Activated CD4-positive, alpha-beta memory T cell treated with anti-CD3 and anti-CD28 coated beads for 36 hours (primary cell): ENCODE measurements at regions of chr17 and their contacts with region 1.

Region 1: DNA sequence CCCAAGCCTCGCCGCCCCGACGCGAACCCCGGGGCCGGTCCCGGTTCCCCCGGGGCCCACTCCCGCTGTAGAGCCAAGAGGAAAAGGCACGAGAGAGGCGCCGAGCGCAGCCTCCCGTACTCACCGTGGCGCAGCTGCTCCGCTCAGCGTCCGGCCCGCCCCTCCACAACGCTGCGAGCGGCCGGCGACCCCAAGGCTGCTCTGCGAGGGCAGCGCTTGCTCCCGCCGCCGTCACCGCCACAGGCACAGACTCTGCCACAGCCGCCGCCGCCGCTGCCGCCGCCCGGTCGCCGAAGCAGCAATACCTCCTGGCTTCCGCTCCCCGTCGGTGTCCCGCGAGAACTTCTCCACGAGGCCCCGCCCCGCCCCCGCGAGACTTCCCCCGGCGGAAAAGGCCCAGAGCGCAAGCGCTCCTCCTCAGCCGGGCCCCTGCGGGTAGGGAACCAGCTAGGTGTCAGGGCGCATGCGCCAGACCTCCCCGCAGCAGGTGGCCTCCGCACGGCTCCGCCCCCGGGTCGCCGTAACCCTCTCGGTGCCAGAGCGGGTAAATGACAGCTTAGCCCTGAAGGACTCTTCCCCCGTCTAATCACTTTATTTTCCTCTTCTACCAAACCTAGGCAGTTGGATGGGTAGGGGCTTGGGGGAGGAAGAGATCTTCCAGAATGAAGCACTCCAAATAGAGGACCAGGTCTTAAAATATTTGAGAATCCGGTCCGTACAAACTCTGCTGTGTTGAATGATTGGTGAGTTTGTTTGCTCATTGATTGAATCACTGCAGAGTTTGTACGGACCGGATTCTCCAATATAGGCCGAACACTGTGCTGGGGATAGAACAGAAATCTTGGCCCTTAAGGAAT is at the start of gene GRB2:
- DNase-seq: peak; percentile 100
- H3K4me3 Mint-ChIP-seq: peak within 1 kb of the TSS; percentile 89
- H3K27ac Mint-ChIP-seq: peak within 1 kb of the TSS; percentile 95
- H3K4me1 Mint-ChIP-seq: peaks cover 31% of the 10 kb centered on the region
- H3K27me3 Mint-ChIP-seq: no peaks in the 10 kb centered on the region
- total RNA-seq, gene GRB2: 174 to 182 TPM

Region 2: GRCh38 chr17:75034236-75034908 is 371.2 kb before region 1 on chr17:
- CTCF ChIA-PET with region 1: no interaction called
- POLR2A ChIA-PET with region 1: no interaction called
- intact Hi-C with region 1: loop called (anchors 10 kb)
- DNase-seq: peak; percentile 95
- H3K4me3 Mint-ChIP-seq: peak overlapping the region; percentile 97
- H3K27ac Mint-ChIP-seq: peak overlapping the region; percentile 96
- H3K4me1 Mint-ChIP-seq: peaks cover 49% of the 10 kb centered on the region
- H3K27me3 Mint-ChIP-seq: peaks cover 4% of the 10 kb centered on the region

Region 3: GRCh38 chr17:75295201-75296158 is 110.1 kb before region 1 on chr17:
- CTCF ChIA-PET with region 1: interaction called, 6 read pairs
- POLR2A ChIA-PET with region 1: interaction called, 15 read pairs
- intact Hi-C with region 1: loop called (anchors 1 kb)
- DNase-seq: peak; percentile 58
- H3K4me3 Mint-ChIP-seq: peak overlapping the region; percentile 37
- H3K27ac Mint-ChIP-seq: peak overlapping the region; percentile 99
- H3K4me1 Mint-ChIP-seq: peaks cover 35% of the 10 kb centered on the region
- H3K27me3 Mint-ChIP-seq: no peaks in the 10 kb centered on the region

Region 4: GRCh38 chr17:75338335-75338734 is 67.3 kb before region 1 on chr17:
- CTCF ChIA-PET with region 1: interaction called, 3 read pairs
- POLR2A ChIA-PET with region 1: interaction called, 7 read pairs
- intact Hi-C with region 1: loop called (anchors 2 kb)
- DNase-seq: peak; percentile 37
- H3K4me3 Mint-ChIP-seq: peak overlapping the region; percentile 33
- H3K27ac Mint-ChIP-seq: peak overlapping the region; percentile 74
- H3K4me1 Mint-ChIP-seq: peaks cover 78% of the 10 kb centered on the region
- H3K27me3 Mint-ChIP-seq: no peaks in the 10 kb centered on the region

Region 5: DNA sequence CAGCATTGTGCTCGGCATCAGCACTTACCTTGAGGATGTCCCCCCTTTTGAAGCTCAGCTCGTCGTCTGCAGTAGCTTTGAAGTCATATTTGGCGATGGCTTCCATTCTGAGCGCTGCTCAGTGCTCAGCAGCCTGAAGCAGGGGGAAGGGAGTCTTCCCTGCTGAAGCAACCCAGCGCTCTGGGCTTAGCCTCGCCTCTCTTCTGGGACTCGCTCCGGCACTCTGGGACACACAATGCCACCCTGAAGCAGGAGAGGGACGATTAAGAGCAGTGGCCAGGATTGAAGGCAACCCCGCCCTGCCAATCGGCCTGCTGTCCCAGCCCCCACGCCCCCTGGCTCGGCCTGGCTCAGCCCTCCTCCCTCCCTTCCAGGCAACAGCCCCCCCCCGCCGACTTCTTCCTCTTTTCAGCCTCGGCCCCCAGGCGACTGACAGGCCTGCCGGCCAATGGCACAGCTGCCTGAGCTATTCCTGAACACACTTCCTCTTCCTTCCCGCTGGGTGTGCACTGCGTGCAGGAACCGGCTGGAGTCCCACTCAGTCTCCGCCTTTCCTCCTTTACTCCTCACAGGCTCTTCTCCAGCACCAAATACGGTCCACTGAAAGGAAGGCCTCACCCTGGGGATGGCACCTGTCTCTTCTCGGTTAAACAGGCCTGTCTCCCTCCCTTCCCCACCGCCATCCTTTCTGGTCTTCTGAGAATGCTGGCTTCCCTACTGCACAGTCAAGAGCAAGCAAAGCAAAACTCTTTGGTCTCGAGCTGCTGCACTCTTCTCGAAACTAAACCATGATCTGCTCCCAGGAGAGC is 11.9 kb before region 1 on chr17:
- CTCF ChIA-PET with region 1: interaction called, 10 read pairs
- POLR2A ChIA-PET with region 1: interaction called, 8 read pairs
- intact Hi-C with region 1: loop called (anchors 1 kb)
- DNase-seq: peak; percentile 91
- H3K4me3 Mint-ChIP-seq: peak overlapping the region; percentile 96
- H3K27ac Mint-ChIP-seq: peak overlapping the region; percentile 85
- H3K4me1 Mint-ChIP-seq: peaks cover 76% of the 10 kb centered on the region
- H3K27me3 Mint-ChIP-seq: no peaks in the 10 kb centered on the region

Region 6: DNA sequence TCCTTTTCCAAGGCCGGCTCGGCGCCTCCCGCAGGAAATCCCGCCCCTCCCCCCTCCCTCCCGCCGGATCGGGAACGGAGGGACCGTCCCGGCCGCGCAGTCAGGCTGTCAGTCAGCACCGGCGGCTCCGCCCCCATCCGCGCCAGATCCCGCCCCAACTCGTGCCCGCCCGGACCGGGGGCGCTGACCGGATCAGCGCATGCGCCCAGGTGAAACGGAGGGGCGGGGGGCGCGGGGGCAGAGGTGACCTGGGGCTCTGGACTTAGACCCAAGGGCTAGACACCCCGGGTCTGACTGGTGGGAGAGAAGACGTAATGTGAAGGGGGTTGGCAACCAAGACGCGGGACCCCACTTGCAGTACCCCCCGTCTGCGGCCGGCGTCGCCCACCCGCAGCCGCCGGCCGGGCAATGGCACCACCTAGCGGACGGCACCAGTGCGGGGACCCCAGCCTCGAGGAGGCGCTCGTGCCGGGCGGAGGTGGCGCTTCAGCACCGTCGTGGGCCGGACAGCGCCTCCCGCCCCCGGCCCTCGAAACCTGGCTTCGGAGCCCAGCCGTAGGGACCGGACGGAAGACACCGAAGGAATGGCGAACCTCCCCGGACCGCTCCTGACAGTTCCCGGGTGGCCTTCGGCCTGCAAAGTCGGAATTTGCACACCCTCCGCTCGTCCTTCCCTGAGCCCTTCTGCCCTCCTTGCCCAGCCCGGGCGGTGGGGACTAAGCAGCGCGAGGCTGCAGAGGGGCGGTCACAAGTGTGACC is 110.1 kb after region 1 on chr17 and contains the start of gene CASKIN2:
- CTCF ChIA-PET with region 1: interaction called, 6 read pairs
- POLR2A ChIA-PET with region 1: no interaction called
- intact Hi-C with region 1: loop called (anchors 1 kb)
- DNase-seq: peak; percentile 91
- H3K4me3 Mint-ChIP-seq: peak within 1 kb of the TSS; percentile 57
- H3K27ac Mint-ChIP-seq: no peak within 1 kb of the TSS
- H3K4me1 Mint-ChIP-seq: peaks cover 17% of the 10 kb centered on the region
- H3K27me3 Mint-ChIP-seq: peaks cover 4% of the 10 kb centered on the region
- total RNA-seq, gene CASKIN2: 4.7 to 5.3 TPM